OCI-LY7 (cell line): ENCODE measurements at regions of chr13 and their contacts with region 1.

Region 1: GRCh38 chr13:91291078-91291477 is 56.4 kb upstream of the MIR17HG start:
- DNase-seq: no peak
- H3K4me3 ChIP-seq: no peak overlapping the region
- H3K27ac ChIP-seq: no peak overlapping the region
- H3K4me1 ChIP-seq: no peaks in the 10 kb centered on the region
- CTCF ChIP-seq: no peak

Region 2: DNA sequence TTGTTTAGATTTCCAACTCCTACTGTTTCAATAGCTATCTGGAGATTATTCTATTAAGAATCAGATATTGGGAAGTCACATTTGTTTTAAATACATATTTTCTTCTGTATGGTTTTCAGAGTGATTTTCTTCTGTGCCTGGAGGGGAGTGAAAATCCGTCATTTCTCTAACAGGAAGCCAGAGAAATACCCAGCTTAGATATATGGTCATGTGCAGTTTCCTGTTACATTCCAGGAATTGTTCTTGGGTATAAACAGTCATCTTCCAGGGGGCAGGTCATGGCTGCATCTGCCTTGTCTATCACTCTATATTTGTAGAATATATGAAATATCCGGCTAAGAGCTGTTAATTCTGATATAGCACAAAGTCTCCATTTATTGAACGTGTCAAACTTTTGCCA is 21.0 kb before region 1 on chr13:
- CTCF ChIA-PET with region 1: no interaction called
- POLR2A ChIA-PET with region 1: interaction called, 11 read pairs
- intact Hi-C with region 1: no loop called
- DNase-seq: no peak
- H3K4me3 ChIP-seq: no peak overlapping the region
- H3K27ac ChIP-seq: no peak overlapping the region
- H3K4me1 ChIP-seq: no peaks in the 10 kb centered on the region
- CTCF ChIP-seq: no peak

Region 3: GRCh38 chr13:91278888-91279287 is 12.2 kb before region 1 on chr13:
- CTCF ChIA-PET with region 1: no interaction called
- POLR2A ChIA-PET with region 1: interaction called, 11 read pairs
- intact Hi-C with region 1: no loop called
- DNase-seq: no peak
- H3K4me3 ChIP-seq: no peak overlapping the region
- H3K27ac ChIP-seq: no peak overlapping the region
- H3K4me1 ChIP-seq: no peaks in the 10 kb centered on the region
- CTCF ChIP-seq: no peak

Region 4: DNA sequence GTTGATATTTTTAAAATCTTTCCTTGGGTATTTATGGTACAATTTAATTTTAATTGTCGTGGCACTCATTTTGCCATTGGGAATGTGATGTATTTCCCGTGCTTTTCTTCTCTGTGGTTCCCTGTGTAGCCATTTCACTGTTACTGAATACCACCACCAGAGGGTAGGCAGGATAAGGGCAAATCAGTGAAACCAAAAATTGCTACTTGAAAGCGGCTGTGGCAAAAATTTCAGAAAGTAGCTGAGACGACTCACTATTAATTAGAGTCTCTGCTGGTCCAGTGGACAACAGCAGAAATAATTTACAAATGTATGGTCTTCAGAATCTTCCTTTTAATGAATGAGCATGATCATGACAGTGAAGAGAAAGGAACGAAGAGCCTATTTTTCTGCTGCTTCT is 22.0 kb after region 1 on chr13:
- CTCF ChIA-PET with region 1: no interaction called
- POLR2A ChIA-PET with region 1: interaction called, 38 read pairs
- intact Hi-C with region 1: loop called (anchors 2 kb)
- DNase-seq: peak; percentile 71
- H3K4me3 ChIP-seq: no peak overlapping the region
- H3K27ac ChIP-seq: no peak overlapping the region
- H3K4me1 ChIP-seq: peaks cover 5% of the 10 kb centered on the region
- CTCF ChIP-seq: no peak

Region 5: GRCh38 chr13:91323349-91323748 is 32.3 kb after region 1 on chr13:
- CTCF ChIA-PET with region 1: no interaction called
- POLR2A ChIA-PET with region 1: interaction called, 28 read pairs
- intact Hi-C with region 1: no loop called
- DNase-seq: no peak
- H3K4me3 ChIP-seq: no peak overlapping the region
- H3K27ac ChIP-seq: no peak overlapping the region
- H3K4me1 ChIP-seq: no peaks in the 10 kb centered on the region
- CTCF ChIP-seq: no peak

Region 6: GRCh38 chr13:91348906-91349435 is 57.9 kb after region 1 on chr13:
- CTCF ChIA-PET with region 1: interaction called, 3 read pairs
- POLR2A ChIA-PET with region 1: interaction called, 12 read pairs
- intact Hi-C with region 1: no loop called
- DNase-seq: peak; percentile 100
- H3K4me3 ChIP-seq: peak overlapping the region; percentile 64
- H3K27ac ChIP-seq: peak overlapping the region; percentile 75
- H3K4me1 ChIP-seq: peaks cover 57% of the 10 kb centered on the region
- CTCF ChIP-seq: no peak